ENCODE measurements at regions of chr12 and their contacts with region 1.

Region 1: GRCh38 chr12:124754949-124755800 is 108.5 kb downstream of the SCARB1 start:
- DNase-seq: peak; percentile 94

Region 2: DNA sequence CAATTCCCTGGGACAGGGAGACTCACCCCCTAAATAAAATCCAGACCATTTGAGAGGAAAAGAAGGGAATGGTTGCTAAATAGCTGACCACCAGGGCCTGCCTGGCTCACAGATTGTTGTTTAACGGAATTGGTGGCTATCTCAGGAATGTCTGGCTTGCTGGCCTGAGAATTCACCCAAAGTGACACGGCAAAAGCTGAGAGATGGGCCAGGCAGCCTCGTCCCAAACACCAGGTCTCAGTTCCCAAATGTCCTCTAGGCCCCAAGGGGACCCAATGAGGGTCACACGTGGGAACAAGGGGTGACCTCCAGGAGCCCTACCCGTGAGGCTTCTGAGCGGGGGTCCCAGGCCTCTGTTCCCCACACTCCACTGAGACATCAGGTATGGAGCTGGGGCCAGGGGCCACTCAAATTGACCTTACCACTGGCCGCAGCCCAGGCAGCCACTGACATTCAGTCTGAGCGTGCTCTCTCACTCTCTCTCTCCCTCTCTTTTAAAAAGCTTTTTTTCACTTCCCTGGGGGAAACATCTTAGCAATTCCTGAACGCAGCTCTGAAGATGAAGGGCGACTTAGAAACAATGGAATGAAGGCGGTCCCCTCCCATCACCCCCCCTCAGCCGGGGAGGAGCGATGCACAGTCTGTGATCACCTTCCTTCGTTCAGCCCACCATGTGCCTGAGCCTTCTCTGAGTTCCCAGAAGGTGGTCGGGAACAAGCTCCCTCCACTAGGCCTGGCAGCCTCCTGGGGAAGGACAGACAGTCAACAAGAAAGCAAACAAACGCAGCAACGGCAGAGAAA is 22.7 kb before region 1 on chr12:
- intact Hi-C with region 1: loop called in 1 of 2 experiments (anchors 2 kb)
- DNase-seq: no peak

Region 3: GRCh38 chr12:124795081-124795948 is 40.1 kb after region 1 on chr12:
- intact Hi-C with region 1: no loop called
- DNase-seq: no peak

Measured in posterior vena cava (tissue), 2 donors.